Activated B cell treated with CpG ODN at 0.5 μM for 24 hours (primary cell): ENCODE measurements at regions of chr20 and their contacts with region 1.

Region 1: GRCh38 chr20:44509762-44510161 is 12.1 kb downstream of the SERINC3 start:
- DNase-seq: no peak
- ATAC-seq: no peak
- H3K4me3 Mint-ChIP-seq: no peak overlapping the region
- H3K27ac Mint-ChIP-seq: no peak overlapping the region
- H3K4me1 Mint-ChIP-seq: no peaks in the 10 kb centered on the region
- H3K27me3 Mint-ChIP-seq: no peaks in the 10 kb centered on the region
- CTCF ChIP-seq: no peak

Region 2: DNA sequence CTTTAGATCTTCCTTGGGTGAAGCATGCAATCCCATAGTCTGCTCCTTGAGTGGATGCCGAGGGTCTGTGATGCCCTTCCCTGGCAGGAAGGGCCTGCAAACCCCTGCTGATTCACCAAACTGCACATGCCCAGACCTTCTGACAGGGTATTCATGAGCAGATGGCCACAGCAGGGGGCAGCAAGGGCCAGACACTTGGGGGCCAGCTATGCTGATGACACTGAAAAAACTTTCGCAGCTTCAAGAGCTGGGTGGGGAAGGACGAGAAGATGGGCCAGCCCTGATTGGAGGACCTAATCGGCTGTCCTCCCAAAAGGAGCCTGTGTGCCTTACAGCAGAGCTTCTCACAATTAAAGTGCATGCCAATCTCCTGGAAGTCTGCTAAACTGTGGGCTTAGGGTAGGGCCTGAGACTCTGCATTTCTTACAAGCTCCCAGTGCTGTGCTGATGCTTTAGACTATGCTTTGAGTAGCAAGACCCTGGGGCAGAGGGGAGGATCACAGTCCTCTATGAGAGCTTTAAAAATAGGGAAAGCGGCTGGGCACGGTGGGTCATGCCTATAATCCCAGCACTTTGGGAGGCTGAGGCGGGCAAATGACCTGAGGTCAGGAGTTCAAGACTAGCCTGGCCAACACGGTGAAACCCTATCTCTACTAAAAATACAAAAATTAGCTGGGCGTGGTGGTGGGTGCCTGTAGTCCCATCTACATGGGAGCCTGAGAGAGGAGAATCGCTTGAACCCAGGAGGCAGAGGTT is 277.9 kb before region 1 on chr20:
- CTCF ChIA-PET with region 1: no interaction called
- POLR2A ChIA-PET with region 1: no interaction called
- intact Hi-C with region 1: no loop called
- DNase-seq: no peak
- ATAC-seq: no peak
- H3K4me3 Mint-ChIP-seq: no peak overlapping the region
- H3K27ac Mint-ChIP-seq: no peak overlapping the region
- H3K4me1 Mint-ChIP-seq: no peaks in the 10 kb centered on the region
- H3K27me3 Mint-ChIP-seq: no peaks in the 10 kb centered on the region
- CTCF ChIP-seq: no peak

Region 3: DNA sequence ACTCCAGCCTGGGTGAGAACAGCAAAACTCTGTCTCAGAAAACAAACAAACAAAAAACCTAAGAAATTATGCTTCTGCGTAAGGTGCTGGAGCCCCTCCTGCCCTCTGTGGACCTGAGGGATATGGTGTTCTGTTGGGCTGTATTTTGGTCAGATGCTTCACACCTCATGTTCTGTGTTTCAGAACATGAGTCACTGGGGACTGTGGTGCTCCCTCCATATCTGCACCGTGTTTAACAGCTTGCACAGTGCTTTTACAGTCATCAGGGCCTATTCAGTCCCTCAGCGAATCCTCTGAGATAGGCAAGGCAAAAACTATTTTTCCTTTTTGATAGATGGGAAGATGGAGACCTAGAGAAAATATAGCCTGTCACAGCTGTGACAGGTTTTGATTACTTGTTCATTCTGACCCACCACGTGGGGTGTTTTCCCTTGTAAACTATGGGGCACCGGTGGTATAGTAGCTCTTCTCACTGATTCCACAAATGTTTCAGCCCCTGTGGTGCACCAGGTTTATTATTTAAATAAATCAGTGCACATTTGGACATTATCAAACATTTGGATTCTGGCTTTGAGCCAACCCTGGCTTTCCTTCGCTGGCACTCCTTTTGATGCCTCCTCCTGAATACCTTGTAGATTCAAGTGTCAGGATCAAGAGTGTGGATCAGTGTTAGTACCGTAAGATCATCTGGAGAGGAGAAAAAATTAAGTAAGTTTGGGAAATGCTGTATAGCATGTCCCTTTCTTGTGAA is 24.5 kb before region 1 on chr20:
- CTCF ChIA-PET with region 1: no interaction called
- POLR2A ChIA-PET with region 1: no interaction called
- intact Hi-C with region 1: no loop called
- DNase-seq: no peak
- ATAC-seq: no peak
- H3K4me3 Mint-ChIP-seq: no peak overlapping the region
- H3K27ac Mint-ChIP-seq: no peak overlapping the region
- H3K4me1 Mint-ChIP-seq: peaks cover 10% of the 10 kb centered on the region
- H3K27me3 Mint-ChIP-seq: no peaks in the 10 kb centered on the region
- CTCF ChIP-seq: no peak

Region 4: DNA sequence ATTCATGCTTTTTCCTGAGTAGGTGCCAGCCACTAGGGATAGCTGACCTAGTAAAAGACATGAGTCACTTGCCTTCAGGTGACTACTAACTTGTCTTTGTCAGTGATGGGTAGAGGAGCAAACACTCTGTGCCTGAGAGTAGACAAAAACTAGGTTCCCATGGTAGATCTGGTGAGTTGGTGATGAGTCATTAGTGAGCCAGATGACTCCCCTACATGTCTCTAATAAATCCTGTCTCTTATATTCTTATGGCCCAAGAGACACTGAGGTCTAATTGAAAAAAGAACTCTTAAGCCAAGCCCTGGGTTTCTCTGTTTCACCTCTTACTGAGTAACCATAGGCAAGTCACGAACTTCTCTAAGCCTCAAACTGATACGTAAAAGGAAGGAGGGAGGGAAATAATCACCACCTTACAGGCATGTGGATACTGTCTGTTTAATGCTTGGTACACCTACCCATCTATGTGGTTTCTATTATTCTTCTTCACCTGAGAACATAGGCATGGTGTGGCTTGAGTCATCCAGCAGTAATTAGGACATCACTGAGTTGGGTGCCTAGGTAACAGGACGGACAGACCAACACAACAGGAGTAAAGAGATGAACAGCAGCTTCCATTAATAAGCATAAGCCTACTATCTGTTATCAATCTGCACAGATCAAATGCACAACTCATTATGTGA is 13.8 kb before region 1 on chr20:
- CTCF ChIA-PET with region 1: no interaction called
- POLR2A ChIA-PET with region 1: no interaction called
- intact Hi-C with region 1: loop called (anchors 2 kb)
- DNase-seq: no peak
- ATAC-seq: peak; percentile 75
- H3K4me3 Mint-ChIP-seq: no peak overlapping the region
- H3K27ac Mint-ChIP-seq: peak overlapping the region; percentile 64
- H3K4me1 Mint-ChIP-seq: peaks cover 36% of the 10 kb centered on the region
- H3K27me3 Mint-ChIP-seq: no peaks in the 10 kb centered on the region
- CTCF ChIP-seq: no peak

Region 5: GRCh38 chr20:44832724-44833123 is 323.0 kb after region 1 on chr20:
- CTCF ChIA-PET with region 1: no interaction called
- POLR2A ChIA-PET with region 1: no interaction called
- intact Hi-C with region 1: no loop called
- DNase-seq: no peak
- ATAC-seq: no peak
- H3K4me3 Mint-ChIP-seq: no peak overlapping the region
- H3K27ac Mint-ChIP-seq: no peak overlapping the region
- H3K4me1 Mint-ChIP-seq: no peaks in the 10 kb centered on the region
- H3K27me3 Mint-ChIP-seq: peaks cover 32% of the 10 kb centered on the region
- CTCF ChIP-seq: no peak